GM13976 (cell line): ENCODE measurements at regions of chr15 and their contacts with region 1.

Region 1: DNA sequence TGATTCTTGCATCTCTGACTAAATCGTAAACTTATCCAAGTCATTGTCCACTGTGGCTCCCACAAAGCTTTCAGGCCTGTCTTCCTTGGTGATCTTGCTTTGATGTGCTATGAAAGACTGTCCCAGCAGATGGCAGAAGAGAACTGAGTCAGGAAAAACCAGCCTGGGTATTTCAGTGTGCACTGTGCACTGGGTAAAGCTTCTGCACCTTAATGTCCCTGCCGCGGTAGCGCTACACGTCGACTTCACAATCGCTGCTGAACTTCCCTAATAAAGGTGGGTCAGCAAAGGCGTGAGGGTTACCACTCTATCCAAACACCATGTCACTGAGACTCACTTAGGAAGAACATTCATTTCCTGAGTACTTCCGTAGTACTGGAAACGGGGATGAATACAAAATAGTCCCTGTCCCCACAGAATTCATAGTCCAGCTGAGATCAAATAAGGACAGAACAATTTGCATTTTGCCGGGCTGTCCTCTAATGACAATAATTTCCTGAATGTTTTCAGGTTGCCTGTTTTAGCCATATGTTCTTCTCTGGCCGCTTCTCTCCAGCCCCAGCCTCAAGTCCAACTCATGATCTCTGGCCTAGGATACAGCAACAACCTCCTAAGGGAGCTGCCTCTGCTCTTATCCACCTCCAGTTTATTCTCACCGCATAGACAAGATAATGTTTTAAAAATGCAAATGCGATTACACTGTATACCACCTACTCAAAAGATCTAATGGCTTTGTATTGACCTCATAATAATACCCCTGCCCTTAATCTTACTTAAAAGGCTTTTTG is 83.6 kb upstream of the AKAP13 start:
- DNase-seq: peak; percentile 82
- CTCF ChIP-seq: peak; percentile 65

Region 2: GRCh38 chr15:85073556-85074194 is 223.1 kb before region 1 on chr15:
- in situ Hi-C with region 1: loop called (anchors 25 kb)
- DNase-seq: peak; percentile 43
- CTCF ChIP-seq: no peak

Region 3: DNA sequence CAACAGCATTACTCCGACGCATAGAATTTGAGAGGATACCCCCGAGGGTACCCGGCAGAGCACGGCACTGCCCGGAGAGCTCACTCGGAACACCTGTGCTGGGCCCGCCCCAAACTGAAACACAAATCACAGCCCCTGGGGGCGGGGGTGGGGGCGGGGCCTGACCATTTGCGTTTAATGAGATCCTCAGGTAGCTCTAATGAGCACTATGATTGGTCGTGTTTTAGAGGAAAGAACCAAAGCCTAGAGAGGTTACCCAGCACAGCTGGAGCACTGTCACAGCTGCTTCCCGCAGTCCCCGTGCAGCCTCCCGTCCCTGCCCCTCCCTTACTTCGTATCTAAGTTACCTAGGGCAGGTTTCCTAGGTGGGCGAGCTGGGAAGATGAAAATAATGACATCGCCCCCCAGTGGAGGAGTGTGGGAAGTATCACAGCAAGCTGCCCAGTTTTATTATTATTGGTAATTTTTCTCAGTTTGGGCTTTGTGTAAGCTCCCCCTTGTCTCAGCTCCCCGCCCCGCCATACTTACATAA is 128.1 kb before region 1 on chr15:
- in situ Hi-C with region 1: loop called (anchors 25 kb)
- DNase-seq: peak; percentile 71
- CTCF ChIP-seq: peak; percentile 41

Region 4: GRCh38 chr15:85831415-85832113 is 534.8 kb after region 1 on chr15:
- in situ Hi-C with region 1: loop called (anchors 10 kb)
- DNase-seq: peak; percentile 47
- CTCF ChIP-seq: no peak